OCI-LY7 (cell line): ENCODE measurements at regions of chr7 and their contacts with region 1.

Region 1: GRCh38 chr7:5557920-5558401 is 134.3 kb upstream of the TNRC18 start:
- DNase-seq: peak; percentile 57
- H3K4me3 ChIP-seq: peak overlapping the region; percentile 66
- H3K27ac ChIP-seq: peak overlapping the region; percentile 81
- H3K4me1 ChIP-seq: peaks cover 55% of the 10 kb centered on the region
- CTCF ChIP-seq: no peak

Region 2: DNA sequence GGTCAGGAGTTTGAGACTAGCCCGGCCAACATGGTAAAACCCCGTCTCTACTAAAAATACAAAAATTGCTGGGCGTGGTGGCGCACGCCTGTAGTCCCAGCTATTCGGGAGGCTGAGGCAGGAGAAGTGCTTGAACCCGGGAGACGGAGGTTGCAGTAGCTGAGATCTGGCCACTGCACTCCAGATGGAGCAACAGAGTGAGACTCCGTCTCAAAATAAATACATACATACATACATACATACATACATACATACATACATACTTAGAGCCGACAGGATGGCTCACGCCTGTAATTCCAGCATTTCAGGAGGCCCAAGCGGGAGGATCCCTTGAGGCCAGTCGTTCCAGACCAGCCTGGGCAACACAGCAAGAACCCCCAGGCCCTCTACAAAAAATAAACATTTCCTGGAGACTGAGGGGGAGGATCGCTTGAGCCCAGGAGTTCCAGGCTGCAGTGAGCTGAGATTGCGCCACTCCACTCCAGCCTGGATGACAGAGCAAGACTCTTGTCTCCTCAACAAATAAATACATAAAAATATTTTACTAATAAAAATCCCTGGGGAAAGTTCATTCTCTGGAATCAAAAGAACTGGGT is 43.4 kb before region 1 on chr7:
- CTCF ChIA-PET with region 1: no interaction called
- POLR2A ChIA-PET with region 1: interaction called, 7 read pairs
- intact Hi-C with region 1: loop called (anchors 1 kb)
- DNase-seq: no peak
- H3K4me3 ChIP-seq: peak overlapping the region; percentile 99
- H3K27ac ChIP-seq: no peak overlapping the region
- H3K4me1 ChIP-seq: peaks cover 25% of the 10 kb centered on the region
- CTCF ChIP-seq: no peak

Region 3: DNA sequence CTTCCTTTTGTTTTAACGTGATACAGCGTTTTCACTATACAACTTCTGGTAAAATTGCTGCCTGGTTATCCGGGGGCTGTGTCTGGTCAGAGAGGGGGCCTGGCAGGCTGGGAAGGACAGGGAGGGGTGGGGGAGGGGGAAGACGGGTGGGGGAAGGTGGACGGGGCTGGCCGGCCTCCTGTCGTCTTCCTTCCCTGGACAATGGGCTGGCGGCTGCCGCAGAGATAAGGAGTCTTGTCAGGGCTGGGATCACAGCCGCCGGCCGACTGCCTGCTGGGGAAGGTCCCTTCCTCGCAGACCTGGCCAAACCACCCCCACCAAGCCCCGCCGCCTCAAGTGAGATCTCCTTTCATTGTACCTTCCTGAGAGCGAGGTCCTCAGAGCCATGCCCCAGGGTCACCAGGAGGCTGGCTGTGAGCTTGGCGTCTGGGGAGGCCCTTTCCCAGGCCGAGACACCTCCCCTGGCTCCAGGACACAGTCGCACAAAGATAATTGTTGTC is 16.9 kb after region 1 on chr7:
- CTCF ChIA-PET with region 1: no interaction called
- POLR2A ChIA-PET with region 1: no interaction called
- intact Hi-C with region 1: no loop called
- DNase-seq: no peak
- H3K4me3 ChIP-seq: no peak overlapping the region
- H3K27ac ChIP-seq: no peak overlapping the region
- H3K4me1 ChIP-seq: peaks cover 5% of the 10 kb centered on the region
- CTCF ChIP-seq: no peak

Region 4: DNA sequence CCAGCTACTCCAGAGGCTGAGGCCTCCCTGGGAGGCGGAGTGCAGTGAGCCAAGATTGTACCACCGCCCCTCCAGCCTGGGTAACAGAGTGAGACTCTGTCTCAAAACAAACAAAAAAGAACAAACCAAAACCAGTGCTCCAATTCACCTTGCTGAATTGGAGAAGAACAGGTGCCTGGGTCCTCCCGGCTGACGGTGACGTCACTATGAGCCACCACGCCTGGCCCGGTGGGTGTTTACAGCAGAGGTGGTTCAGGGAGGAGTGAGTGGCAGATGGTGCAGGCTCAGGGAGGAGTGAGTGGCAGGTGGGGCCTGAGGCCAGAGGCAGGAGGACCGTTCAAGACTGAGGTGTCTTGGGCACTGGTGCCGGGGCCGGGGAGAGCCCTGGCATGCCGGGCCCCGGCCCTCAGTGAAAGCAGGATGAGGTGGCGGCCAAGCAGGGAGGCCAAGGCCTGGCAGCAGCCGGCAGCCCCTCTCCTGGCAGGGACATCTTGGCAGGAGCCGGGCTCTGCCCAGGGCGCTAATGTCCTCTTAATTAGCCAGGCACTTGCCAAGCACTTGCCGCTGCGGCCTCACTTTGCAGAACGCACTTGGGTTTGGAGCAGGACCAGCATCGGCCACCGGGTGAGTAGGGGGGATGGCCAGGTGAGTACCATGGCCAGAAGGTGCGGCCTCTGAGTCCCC is 28.5 kb after region 1 on chr7:
- CTCF ChIA-PET with region 1: no interaction called
- POLR2A ChIA-PET with region 1: no interaction called
- intact Hi-C with region 1: no loop called
- DNase-seq: no peak
- H3K4me3 ChIP-seq: no peak overlapping the region
- H3K27ac ChIP-seq: no peak overlapping the region
- H3K4me1 ChIP-seq: no peaks in the 10 kb centered on the region
- CTCF ChIP-seq: no peak